Tibial artery (tissue), 4 donors: ENCODE measurements at regions of chr4 and their contacts with region 1.

Region 1: GRCh38 chr4:52869196-52869595 is 7.1 kb downstream of the RASL11B start:
- DNase-seq: peak; percentile 58 to 91
- H3K4me3 ChIP-seq: peak overlapping the region in 1 of 2 donors; percentile 31
- H3K27ac ChIP-seq: peak overlapping the region; percentile 77 to 86
- H3K4me1 ChIP-seq: peaks cover 0 to 64% (median 43%) of the 10 kb centered on the region in 4 donors
- H3K27me3 ChIP-seq: no peaks in the 10 kb centered on the region
- CTCF ChIP-seq: no peak

Region 2: GRCh38 chr4:52712172-52712990 is 156.8 kb before region 1 on chr4:
- intact Hi-C with region 1: loop called (anchors 5 kb)
- DNase-seq: peak; percentile 98 to 99
- H3K4me3 ChIP-seq: peak overlapping the region; percentile 90 to 93
- H3K27ac ChIP-seq: peak overlapping the region; percentile 95
- H3K4me1 ChIP-seq: peaks cover 0 to 27% (median 17%) of the 10 kb centered on the region in 4 donors
- H3K27me3 ChIP-seq: no peaks in the 10 kb centered on the region
- CTCF ChIP-seq: no peak